A549 (cell line): ENCODE measurements at regions of chr15 and their contacts with region 1.

Region 1: DNA sequence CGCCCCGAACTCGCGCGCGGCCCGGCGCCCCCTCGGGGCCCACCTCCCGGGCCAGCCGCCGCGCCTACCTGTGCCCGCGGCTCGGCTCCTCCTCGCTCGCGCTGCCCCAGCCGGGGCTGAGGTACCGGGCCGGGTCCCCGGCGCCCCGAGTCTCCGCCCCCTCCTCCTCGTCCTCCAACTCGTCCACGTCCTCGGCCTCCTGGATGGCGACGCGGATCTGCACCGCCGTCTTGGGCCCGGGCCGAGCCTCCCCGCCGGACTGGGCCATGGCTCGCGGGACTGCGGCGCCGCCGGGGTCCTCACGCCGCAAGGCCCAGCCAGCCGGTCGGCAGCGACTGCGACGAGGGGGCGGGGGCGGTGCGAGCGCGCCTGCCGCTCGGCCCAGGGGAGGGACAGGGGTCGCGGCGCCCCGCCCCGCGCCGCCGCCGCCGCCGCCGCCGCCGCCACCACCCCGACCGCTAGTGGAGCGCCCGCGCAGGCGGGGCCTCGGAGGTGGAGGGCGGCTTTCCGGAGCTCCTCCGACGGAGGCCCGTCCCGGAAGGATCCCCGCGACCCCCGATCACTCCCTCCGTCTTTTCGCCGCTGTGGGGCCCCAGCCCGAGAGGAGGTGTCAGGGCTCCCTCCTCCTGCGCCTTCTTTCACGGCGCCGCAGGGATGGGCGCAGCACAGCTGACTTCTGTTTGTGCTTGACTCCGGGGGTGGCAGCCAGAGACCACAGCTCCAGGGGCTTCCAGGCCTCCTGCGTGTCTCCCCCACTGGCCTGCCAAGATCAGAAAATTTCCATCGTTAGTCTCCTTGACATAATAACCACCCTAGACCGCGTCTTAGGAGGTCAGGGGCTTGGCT is at the start of gene LARP6:
- DNase-seq: peak; percentile 52 to 59
- ATAC-seq: peak; percentile 75 to 81
- H3K4me3 ChIP-seq: peak within 1 kb of the TSS; percentile 74
- H3K27ac ChIP-seq: peak within 1 kb of the TSS; percentile 89 to 93
- H3K4me1 ChIP-seq: peaks cover 41% of the 10 kb centered on the region
- CTCF ChIP-seq: no peak
- EP300 ChIP-seq: no peak
- POLR2A ChIP-seq: peak; percentile 71
- RAD21 ChIP-seq: no peak
- polyA plus RNA-seq, gene LARP6: 120 and 158 TPM in 2 replicates

Region 2: DNA sequence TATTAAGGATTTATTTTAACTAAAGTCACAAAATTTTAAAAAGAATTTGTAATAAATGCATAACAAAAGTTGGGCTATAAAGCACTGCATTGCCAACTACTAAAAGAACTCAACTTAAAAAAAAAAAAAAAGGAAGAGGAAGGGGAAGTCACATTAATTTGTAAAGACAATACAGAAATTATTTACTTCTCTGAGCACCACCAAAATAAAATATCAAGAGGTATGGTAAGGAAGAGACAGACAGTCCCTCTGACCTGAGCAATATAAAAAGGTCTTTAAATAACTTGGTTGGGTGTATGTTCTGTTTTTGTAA is 174.2 kb before region 1 on chr15:
- CTCF ChIA-PET with region 1: interaction called, 10 read pairs
- POLR2A ChIA-PET with region 1: no interaction called
- DNase-seq: no peak
- ATAC-seq: no peak
- H3K4me3 ChIP-seq: no peak overlapping the region
- H3K27ac ChIP-seq: no peak overlapping the region
- H3K4me1 ChIP-seq: no peaks in the 10 kb centered on the region
- CTCF ChIP-seq: no peak
- EP300 ChIP-seq: no peak
- POLR2A ChIP-seq: no peak
- RAD21 ChIP-seq: no peak

Region 3: GRCh38 chr15:70826634-70827033 is 27.4 kb before region 1 on chr15:
- CTCF ChIA-PET with region 1: interaction called, 55 read pairs
- POLR2A ChIA-PET with region 1: no interaction called
- DNase-seq: peak; percentile 58 to 78
- ATAC-seq: peak; percentile 67 to 68; a peak in 5 of 6 replicates
- H3K4me3 ChIP-seq: no peak overlapping the region
- H3K27ac ChIP-seq: peak overlapping the region; percentile 69 to 85
- H3K4me1 ChIP-seq: peaks cover 41% of the 10 kb centered on the region
- CTCF ChIP-seq: no peak
- EP300 ChIP-seq: no peak
- POLR2A ChIP-seq: no peak
- RAD21 ChIP-seq: no peak

Region 4: GRCh38 chr15:70833897-70834765 is 19.9 kb before region 1 on chr15:
- CTCF ChIA-PET with region 1: interaction called, 13 read pairs
- POLR2A ChIA-PET with region 1: interaction called, 5 read pairs
- DNase-seq: peak; percentile 73 to 77
- ATAC-seq: peak; percentile 47 to 80; a peak in 4 of 6 replicates
- H3K4me3 ChIP-seq: no peak overlapping the region
- H3K27ac ChIP-seq: peak overlapping the region; percentile 70 to 85
- H3K4me1 ChIP-seq: peaks cover 40% of the 10 kb centered on the region
- CTCF ChIP-seq: no peak
- EP300 ChIP-seq: peak; percentile 23 to 29; a peak in 2 of 5 replicates
- POLR2A ChIP-seq: no peak
- RAD21 ChIP-seq: no peak